Colonic mucosa (tissue), 4 donors: ENCODE measurements at regions of chr4 and their contacts with region 1.

Region 1: DNA sequence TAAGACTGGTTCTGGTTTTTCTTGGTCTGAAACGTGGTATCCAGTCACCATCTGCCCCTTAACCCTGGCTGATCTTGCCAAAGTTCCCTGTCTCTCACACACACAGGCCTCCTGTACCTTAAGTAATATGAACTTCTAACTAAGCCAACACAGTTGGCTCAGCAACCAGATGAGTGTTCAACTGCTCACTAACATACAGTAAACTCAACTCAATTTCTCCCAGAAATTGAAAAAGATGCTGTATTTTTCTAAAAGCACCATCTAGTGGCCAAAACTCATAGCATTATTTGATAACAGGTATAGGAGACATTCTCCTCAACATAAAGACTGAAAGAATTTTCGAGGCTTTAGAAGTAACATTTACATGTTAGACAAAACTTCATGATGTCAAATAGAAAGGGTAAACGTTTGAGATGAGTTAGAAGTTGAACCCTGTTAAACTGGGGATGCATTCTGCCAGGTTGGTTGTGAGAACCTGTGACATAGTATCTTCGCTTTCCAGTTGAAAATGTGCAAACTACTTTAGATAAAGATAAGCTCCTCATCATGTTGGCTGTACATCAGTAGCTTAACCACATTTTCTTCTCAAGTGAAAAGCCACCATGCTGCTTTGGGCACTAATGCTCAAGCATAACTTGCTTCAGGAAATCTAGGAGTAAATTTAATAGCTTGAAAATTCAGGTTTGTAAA is 31.2 kb downstream of the CCNI start:
- DNase-seq: no peak
- H3K4me3 ChIP-seq: no peak overlapping the region
- H3K27ac ChIP-seq: no peak overlapping the region
- H3K4me1 ChIP-seq: no peaks in the 10 kb centered on the region
- H3K27me3 ChIP-seq: no peaks in the 10 kb centered on the region
- CTCF ChIP-seq: peak; percentile 40

Region 2: DNA sequence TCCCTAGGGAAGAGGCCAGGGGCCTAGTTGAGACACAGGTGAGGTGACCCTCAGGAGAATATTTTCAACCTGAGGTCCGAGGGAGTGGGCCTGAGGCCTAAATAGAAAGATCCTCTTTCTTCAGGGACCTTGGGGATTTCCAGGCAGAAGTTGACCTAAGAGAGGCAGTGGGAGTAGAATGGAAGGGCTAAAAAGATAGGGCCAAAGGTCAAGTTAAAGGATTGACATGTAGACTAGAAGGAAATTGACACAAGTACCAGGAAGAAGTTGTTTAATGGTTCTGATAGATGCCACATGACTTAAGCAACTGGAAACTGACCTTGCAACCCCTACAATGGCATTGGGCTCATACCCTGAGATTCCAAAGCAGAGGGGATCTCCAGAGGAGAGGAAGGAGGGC is 532.7 kb before region 1 on chr4:
- intact Hi-C with region 1: loop called (anchors 5 kb)
- DNase-seq: no peak
- H3K4me3 ChIP-seq: no peak overlapping the region
- H3K27ac ChIP-seq: peak overlapping the region; percentile 63
- H3K4me1 ChIP-seq: no peaks in the 10 kb centered on the region
- H3K27me3 ChIP-seq: no peaks in the 10 kb centered on the region
- CTCF ChIP-seq: no peak

Region 3: GRCh38 chr4:76765473-76766183 is 279.0 kb before region 1 on chr4:
- intact Hi-C with region 1: loop called (anchors 10 kb)
- DNase-seq: no peak
- H3K4me3 ChIP-seq: no peak overlapping the region
- H3K27ac ChIP-seq: no peak overlapping the region
- H3K4me1 ChIP-seq: no peaks in the 10 kb centered on the region
- H3K27me3 ChIP-seq: no peaks in the 10 kb centered on the region
- CTCF ChIP-seq: no peak

Region 4: GRCh38 chr4:76881375-76881774 is 163.2 kb before region 1 on chr4:
- intact Hi-C with region 1: no loop called
- DNase-seq: peak; percentile 85
- H3K4me3 ChIP-seq: no peak overlapping the region
- H3K27ac ChIP-seq: no peak overlapping the region
- H3K4me1 ChIP-seq: no peaks in the 10 kb centered on the region
- H3K27me3 ChIP-seq: no peaks in the 10 kb centered on the region
- CTCF ChIP-seq: no peak

Region 5: GRCh38 chr4:76949276-76950051 is 95.1 kb before region 1 on chr4 and contains the start of gene SEPTIN11:
- intact Hi-C with region 1: loop called (anchors 5 kb)
- DNase-seq: peak; percentile 93
- H3K4me3 ChIP-seq: peak within 1 kb of the TSS; percentile 58
- H3K27ac ChIP-seq: peak within 1 kb of the TSS; percentile 91
- H3K4me1 ChIP-seq: no peaks in the 10 kb centered on the region
- H3K27me3 ChIP-seq: no peaks in the 10 kb centered on the region
- CTCF ChIP-seq: no peak
- total RNA-seq, gene SEPTIN11: 114 to 134 TPM